Sciatic nerve (tissue), 2 donors: ENCODE measurements at regions of chr2 and their contacts with region 1.

Region 1: DNA sequence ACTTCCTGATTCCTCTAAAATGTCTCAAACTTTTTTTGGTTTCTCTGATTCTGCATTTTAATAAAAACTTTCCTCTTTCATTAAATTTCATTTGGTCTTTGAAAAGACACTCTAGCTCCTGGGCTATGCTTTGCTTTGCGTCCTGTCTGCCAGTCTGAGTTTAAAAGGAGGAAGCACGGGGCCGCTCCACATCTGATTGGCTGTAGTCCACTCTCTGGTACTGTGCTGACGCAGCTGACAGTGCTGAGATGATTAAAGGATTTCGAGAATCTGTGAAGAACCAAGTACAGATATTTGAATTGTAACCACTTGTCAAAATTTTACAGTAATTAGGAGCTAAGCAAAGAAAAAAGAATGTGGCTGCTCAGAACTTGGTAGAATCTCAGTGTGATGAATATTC is 199.6 kb upstream of the HNMT start:
- DNase-seq: no peak
- ATAC-seq: no peak

Region 2: DNA sequence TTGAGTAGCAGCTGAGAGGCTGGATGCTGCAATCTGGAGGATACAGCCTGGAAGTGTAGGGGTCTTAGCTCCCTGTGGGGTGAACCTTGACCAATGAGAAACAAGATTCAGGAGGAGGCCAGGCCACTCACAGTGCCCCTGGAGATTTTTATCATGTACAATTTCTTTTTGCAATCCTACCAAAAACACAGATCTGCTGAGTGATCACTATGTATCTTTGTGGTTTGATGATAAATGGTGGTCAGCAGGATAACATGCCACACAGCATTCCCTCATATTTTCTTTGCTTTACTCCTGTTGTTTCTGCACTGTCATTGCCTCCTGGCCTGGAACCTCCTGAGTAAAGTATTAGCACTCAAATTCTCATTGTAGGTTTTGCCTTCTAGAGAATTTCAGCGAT is 641.4 kb before region 1 on chr2:
- intact Hi-C with region 1: loop called (anchors 10 kb)
- DNase-seq: no peak
- ATAC-seq: no peak

Region 3: DNA sequence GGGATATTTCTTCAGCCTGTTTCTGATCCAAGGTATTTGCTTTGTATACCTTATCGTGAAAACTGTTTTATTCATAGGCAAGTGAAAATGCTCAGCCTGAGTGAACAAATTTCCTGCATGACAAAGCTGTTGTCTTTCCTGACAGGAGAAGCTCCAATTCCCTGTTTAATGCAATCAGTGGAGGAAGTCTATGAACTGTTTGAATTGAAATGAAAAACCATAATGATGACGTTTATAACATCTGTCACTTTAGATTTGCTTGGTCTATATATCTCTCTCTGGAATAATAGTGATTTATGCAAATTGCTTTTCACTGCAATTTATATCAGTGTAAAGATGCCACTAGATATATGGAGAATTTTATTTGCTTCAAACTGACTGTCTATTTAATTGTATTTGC is 39.7 kb before region 1 on chr2:
- intact Hi-C with region 1: no loop called
- DNase-seq: no peak
- ATAC-seq: no peak

Region 4: GRCh38 chr2:139514951-139515350 is 1750.3 kb after region 1 on chr2:
- intact Hi-C with region 1: no loop called
- DNase-seq: no peak
- ATAC-seq: no peak